Calu3 (cell line): ENCODE measurements at regions of chr6 and their contacts with region 1.

Region 1: GRCh38 chr6:73285674-73286283 is 22.8 kb upstream of the KHDC1 start:
- DNase-seq: no peak
- H3K4me3 Mint-ChIP-seq: no peak overlapping the region
- H3K27ac Mint-ChIP-seq: no peak overlapping the region
- H3K4me1 Mint-ChIP-seq: no peaks in the 10 kb centered on the region
- H3K27me3 Mint-ChIP-seq: no peaks in the 10 kb centered on the region
- CTCF ChIP-seq: no peak

Region 2: DNA sequence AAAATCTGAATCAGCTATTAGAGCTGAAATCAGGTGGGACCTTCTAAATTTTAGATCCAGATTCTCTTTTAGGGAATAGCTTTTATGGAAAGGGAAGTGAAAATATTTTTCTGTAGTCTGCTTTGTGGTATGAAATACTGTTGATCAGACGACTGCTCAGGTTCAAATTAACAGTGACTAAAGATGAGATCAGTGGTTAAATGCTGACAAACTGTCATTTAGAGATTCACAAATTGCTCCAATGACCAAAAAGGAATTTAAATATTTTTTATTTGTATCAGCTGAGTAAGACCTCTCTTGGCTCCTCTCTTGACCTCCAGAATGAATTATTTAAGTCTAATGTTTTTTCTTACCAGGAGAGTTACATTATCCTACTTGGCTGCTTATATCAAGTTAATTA is 586.6 kb before region 1 on chr6:
- CTCF ChIA-PET with region 1: interaction called, 10 read pairs
- intact Hi-C with region 1: no loop called
- DNase-seq: no peak
- H3K4me3 Mint-ChIP-seq: no peak overlapping the region
- H3K27ac Mint-ChIP-seq: no peak overlapping the region
- H3K4me1 Mint-ChIP-seq: no peaks in the 10 kb centered on the region
- H3K27me3 Mint-ChIP-seq: no peaks in the 10 kb centered on the region
- CTCF ChIP-seq: no peak

Region 3: GRCh38 chr6:73329201-73329600 is 43.4 kb after region 1 on chr6:
- CTCF ChIA-PET with region 1: interaction called, 39 read pairs
- intact Hi-C with region 1: loop called (anchors 1 kb)
- DNase-seq: no peak
- H3K4me3 Mint-ChIP-seq: no peak overlapping the region
- H3K27ac Mint-ChIP-seq: no peak overlapping the region
- H3K4me1 Mint-ChIP-seq: no peaks in the 10 kb centered on the region
- H3K27me3 Mint-ChIP-seq: peaks cover 37% of the 10 kb centered on the region
- CTCF ChIP-seq: no peak

Region 4: DNA sequence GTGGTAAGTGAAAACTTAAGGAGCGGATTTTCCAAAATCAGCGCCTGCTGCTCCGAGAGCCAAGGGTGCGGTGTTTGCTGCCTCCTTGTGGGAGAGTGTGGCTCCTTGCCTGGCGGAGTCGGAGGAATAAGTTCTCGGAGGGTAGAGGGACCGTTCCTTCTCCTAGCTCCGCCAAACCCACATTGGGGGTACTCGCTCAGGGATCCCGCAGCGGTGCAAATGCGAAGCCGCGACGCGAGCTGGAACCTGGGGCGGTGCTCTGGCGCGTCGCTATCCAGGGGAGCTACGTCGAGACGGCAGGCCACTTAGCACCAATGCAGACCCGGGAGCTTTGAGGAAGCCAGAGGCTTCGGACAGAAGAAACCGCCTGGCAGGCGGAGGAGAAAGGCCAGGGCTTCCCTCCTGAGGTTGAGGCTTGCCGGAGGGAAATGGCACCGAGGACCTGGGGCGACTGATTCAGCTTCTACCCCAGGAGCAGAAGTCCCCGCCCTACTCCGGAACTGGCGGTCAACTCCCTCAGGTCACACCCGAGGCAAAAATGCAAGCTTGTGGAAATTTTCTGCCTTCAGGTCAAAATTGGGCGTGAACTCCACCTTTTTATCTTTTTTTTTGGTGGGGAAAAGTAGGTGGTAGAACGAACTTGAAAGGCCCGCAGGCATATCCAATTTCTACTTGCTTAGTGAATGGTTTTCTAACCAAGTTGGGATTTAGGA is 103.2 kb after region 1 on chr6:
- CTCF ChIA-PET with region 1: interaction called, 19 read pairs
- intact Hi-C with region 1: loop called (anchors 1 kb)
- DNase-seq: peak; percentile 74
- H3K4me3 Mint-ChIP-seq: peak overlapping the region; percentile 80
- H3K27ac Mint-ChIP-seq: peak overlapping the region; percentile 90
- H3K4me1 Mint-ChIP-seq: peaks cover 15% of the 10 kb centered on the region
- H3K27me3 Mint-ChIP-seq: no peaks in the 10 kb centered on the region
- CTCF ChIP-seq: peak; percentile 65